OCI-LY7 (cell line): ENCODE measurements at regions of chr2 and their contacts with region 1.

Region 1: DNA sequence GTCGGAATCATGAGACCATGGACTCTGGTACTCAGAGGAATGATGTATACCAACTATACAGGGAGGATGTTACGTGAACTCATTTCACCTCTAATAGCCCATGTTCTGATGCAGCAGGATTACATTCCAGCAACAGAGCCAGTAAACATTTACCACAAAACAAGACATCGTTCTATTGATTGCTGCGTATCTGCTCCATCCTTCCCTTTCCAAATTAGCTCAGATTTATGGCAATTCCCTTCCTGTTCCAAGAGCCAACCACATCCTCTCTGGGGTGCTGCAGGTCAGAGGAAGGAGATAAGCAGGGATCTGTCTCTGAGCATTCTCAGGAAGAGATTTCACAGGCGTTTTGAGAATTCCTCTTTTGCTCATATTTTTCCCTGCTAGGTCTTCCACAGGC is 98.3 kb downstream of the KLF7 start:
- DNase-seq: no peak
- H3K4me3 ChIP-seq: no peak overlapping the region
- H3K27ac ChIP-seq: no peak overlapping the region
- H3K4me1 ChIP-seq: no peaks in the 10 kb centered on the region
- CTCF ChIP-seq: no peak

Region 2: GRCh38 chr2:207035875-207036274 is 31.6 kb before region 1 on chr2:
- CTCF ChIA-PET with region 1: no interaction called
- POLR2A ChIA-PET with region 1: no interaction called
- intact Hi-C with region 1: no loop called
- DNase-seq: no peak
- H3K4me3 ChIP-seq: no peak overlapping the region
- H3K27ac ChIP-seq: no peak overlapping the region
- H3K4me1 ChIP-seq: no peaks in the 10 kb centered on the region
- CTCF ChIP-seq: no peak

Region 3: GRCh38 chr2:207107551-207107950 is 40.1 kb after region 1 on chr2:
- CTCF ChIA-PET with region 1: no interaction called
- POLR2A ChIA-PET with region 1: no interaction called
- intact Hi-C with region 1: no loop called
- DNase-seq: no peak
- H3K4me3 ChIP-seq: no peak overlapping the region
- H3K27ac ChIP-seq: no peak overlapping the region
- H3K4me1 ChIP-seq: no peaks in the 10 kb centered on the region
- CTCF ChIP-seq: no peak

Region 4: DNA sequence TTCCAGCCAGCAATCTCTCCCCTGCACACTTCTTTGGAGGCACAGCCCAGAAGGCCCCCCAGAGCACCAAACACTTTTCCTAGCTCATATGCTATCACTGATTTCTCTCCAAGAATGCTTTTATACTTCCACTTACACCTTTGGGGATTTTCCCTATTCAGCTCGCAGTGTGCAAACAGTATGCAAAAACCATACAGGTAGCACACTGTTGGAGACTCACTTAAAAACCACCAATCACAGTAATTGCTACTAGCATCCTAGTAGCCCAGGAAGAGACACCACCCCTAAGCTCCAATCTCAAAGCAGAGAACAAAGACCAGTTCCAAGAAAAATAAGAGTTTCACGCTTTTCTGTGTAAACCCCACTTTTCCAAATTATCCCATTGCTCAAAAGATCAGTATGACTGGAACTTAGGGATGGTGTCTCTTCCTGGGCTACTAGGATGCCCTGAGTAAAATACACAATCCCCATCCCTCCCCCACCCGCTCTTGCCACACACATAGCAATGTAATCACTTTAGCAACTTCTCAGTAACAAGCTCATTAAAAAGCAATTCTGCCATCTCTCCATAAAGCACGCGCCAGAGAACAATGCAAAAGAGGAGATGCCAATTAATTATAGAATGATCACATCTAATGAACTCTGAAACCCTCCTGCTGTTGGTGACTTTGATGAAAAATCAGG is 55.3 kb after region 1 on chr2:
- CTCF ChIA-PET with region 1: interaction called, 11 read pairs
- POLR2A ChIA-PET with region 1: no interaction called
- intact Hi-C with region 1: no loop called
- DNase-seq: no peak
- H3K4me3 ChIP-seq: no peak overlapping the region
- H3K27ac ChIP-seq: no peak overlapping the region
- H3K4me1 ChIP-seq: no peaks in the 10 kb centered on the region
- CTCF ChIP-seq: no peak

Region 5: GRCh38 chr2:207258263-207258991 is 191.0 kb after region 1 on chr2:
- CTCF ChIA-PET with region 1: no interaction called
- POLR2A ChIA-PET with region 1: no interaction called
- intact Hi-C with region 1: no loop called
- DNase-seq: no peak
- H3K4me3 ChIP-seq: no peak overlapping the region
- H3K27ac ChIP-seq: no peak overlapping the region
- H3K4me1 ChIP-seq: no peaks in the 10 kb centered on the region
- CTCF ChIP-seq: no peak